ENCODE measurements at regions of chrX and their contacts with region 1.

Region 1: DNA sequence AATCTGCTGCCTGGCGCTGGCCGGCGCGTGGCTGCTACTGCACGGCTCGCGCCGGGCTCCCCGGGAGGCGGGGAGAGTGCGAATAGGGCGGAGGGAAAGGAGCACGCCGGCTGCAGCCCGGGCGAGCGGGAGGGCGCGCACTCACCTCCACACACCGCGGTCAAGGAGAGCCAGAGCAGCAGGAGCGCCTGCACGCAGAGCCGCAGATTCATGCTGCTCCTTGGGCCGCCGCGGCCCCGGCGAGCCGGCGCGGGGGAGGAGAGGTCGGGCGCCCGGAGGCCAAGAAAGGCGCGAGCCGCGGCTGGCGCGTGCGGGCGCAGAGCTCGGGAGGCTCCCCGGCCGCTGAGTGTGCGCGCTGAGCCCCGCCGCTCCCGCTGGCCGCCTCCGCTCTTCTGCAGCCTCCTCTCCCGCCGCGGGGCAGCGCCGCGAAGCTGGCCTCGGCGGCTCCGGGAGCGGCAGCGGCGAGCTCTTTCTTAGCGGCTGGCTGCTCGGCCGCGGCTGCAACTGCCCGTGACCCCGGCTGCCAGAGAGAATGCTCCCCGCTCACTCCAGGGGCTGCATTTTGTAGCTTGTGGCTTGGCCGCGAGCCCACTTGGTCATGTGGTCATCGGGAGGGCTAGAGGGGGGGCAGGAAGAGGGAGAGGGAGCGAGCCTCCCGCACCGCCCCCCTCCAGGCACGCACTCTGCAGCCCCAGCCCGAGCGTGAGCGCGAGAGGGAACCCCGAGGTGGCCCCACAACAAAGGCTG is at the start of gene APLN:
- DNase-seq: no peak
- total RNA-seq, gene APLN: 6.2 TPM

Region 2: GRCh38 chrX:129360175-129360574 is 294.4 kb before region 1 on chrX:
- intact Hi-C with region 1: no loop called
- DNase-seq: no peak

Region 3: DNA sequence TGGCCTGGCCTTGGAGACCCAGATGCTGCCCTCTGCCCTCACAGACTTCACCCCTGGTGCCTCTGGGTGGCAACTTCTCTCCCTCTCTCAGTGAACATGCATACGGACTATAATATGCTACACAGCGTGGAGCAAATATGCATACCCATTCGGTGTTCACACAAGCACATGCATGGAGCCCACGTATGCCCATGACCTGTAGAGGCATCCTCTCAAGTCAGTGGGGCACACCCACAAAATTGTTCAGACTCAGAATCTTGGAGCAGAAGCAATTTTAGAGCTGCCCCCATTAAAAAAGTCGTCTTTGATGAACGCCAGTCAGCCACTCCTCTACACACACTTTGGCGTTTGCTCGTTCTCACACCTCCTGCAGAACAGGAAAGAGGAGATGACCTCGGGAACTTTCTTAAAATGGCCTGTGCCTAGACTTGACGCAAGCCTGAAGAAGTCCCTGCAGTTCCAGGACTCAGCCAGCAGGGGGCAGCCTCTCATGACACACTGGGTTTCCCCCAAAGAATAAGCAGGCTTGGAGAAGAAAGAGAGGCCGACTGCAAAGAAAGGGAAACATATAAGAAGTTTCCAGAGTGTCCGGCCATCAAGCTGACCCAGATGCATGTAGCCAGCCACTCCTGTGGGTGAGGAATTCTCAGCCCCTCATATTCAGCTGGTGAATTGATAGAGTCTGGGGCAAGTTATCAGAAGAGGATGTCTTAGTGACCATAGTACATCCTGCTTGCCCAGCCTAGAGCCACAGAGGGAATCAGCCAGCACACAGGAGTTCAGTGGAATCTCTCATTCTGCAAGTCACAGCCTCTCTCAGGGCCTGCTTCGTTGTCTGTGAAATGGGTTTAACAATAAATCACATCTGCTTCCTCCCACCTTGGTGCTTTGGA is 17.1 kb before region 1 on chrX:
- intact Hi-C with region 1: no loop called
- DNase-seq: no peak

Region 4: GRCh38 chrX:129706400-129707072 is 51.9 kb after region 1 on chrX:
- intact Hi-C with region 1: loop called (anchors 5 kb)
- DNase-seq: no peak

Region 5: DNA sequence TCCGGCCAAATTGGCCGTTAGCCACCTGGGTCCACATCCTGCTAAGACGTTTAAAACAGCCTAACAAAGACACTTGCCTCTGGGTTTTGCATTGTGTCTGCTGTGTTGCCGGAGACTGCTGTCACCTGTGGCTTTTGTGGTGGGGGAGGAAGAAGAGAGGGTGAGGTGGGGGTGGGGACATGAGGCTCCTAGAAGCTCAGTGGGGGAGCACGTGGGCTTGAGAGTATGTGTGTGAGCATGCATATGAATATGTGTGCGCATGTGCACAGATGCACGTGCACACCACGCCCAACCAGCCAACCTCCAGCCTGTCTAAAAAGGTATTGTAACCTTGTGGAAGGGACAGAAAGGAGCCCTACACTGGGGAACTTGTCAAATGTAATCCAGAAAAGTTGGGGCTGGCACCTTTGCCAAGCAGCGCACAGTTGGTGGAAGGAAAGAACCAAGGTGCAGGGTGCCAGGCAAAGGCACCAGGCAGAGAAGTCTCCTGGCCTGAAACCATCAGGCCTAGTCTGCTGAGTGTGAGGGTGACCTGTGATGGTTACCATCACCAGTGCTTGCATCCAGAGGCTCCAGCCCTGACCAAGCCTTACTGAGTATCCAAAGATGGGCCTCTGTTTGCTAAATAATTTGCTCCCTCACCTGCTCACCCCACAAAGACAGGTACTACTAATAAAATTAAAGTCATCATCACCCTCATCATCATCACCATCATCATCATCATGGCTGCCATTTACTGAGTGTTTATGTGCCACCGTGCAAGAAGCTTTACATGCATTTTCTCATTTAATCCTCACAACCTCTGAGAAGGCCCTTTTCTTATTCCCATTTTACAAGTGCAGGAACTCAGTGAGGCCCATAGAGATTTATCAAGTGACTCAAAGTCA is 115.1 kb after region 1 on chrX:
- intact Hi-C with region 1: no loop called
- DNase-seq: no peak

Measured in cardiac septum (tissue), 1 donor.